H1 (cell line): ENCODE measurements at regions of chr11 and their contacts with region 1.

Region 1: GRCh38 chr11:61671527-61671926 is 8.7 kb upstream of the DAGLA start:
- DNase-seq: no peak
- H3K4me3 ChIP-seq: no peak overlapping the region
- H3K27ac ChIP-seq: no peak overlapping the region
- H3K4me1 ChIP-seq: peaks cover 0 to 3% (median under 1%) of the 10 kb centered on the region in 4 experiments; a peak in 2 of 7 replicates
- H3K27me3 ChIP-seq: no peaks in the 10 kb centered on the region; a peak in 2 of 7 replicates
- CTCF ChIP-seq: peak; percentile 78 to 88 (median 84)
- EP300 ChIP-seq: no peak
- POLR2A ChIP-seq: no peak
- RAD21 ChIP-seq: peak; percentile 42 to 53; a peak in 3 of 4 replicates

Region 2: DNA sequence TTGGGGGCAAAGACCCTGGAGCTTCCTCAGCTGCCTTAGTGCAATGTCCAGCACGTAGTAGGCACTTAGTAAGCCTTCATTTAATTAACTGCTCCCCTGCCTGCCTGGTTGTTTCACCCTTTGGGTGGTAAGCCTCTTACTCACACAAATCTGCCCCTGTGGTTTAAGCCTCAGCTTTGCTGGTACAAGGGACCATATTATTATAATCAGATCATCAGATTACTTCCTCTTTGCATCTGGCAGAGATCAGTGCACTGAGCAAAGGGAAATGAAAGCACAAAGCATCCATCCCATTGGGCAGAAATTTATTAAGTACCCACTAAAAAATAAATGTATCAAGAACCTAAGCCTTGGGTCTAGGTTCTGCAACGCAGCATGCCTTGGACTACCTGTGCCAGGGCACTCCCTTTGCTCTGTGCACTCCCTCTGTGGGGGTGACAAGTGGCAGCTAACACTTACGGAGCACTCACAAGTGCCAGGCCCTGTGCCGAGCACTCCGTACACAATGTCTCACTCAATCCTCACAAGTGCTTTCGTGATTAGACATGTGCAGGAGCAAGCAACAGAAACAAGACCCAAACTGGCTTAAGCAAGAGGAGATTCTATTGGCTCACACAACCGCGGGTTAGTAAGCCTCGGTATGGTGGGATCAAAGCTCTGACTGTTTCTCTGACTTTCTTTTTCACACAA is 26.2 kb before region 1 on chr11:
- CTCF ChIA-PET with region 1: interaction called, 12 read pairs
- POLR2A ChIA-PET with region 1: no interaction called
- DNase-seq: no peak
- H3K4me3 ChIP-seq: no peak overlapping the region
- H3K27ac ChIP-seq: no peak overlapping the region
- H3K4me1 ChIP-seq: peaks cover 0 to 3% (median 0%) of the 10 kb centered on the region in 4 experiments; a peak in 1 of 7 replicates
- H3K27me3 ChIP-seq: no peaks in the 10 kb centered on the region
- CTCF ChIP-seq: no peak
- EP300 ChIP-seq: no peak
- POLR2A ChIP-seq: no peak
- RAD21 ChIP-seq: no peak

Region 3: DNA sequence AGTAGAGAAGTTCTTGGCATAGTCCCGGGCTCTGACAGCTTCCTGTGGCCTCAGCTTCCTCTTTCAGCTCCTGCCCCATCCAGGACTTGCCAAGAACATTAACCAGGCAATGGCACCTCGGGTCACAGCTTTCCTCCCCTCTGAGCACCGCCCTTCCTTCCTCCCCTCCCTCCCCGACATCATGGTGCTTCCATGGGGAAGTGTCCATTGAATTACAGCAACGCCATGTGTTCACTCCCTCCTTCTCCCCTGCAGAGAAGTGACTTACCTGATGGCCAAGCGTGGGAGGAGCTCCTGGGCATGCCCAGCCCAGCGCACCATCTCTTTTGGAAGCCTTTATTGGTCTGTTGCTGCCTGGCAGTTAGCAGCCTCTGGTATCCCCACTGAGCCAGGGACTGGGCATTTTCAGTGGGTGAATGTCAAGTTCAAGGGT is 17.1 kb before region 1 on chr11:
- CTCF ChIA-PET with region 1: interaction called, 15 read pairs
- POLR2A ChIA-PET with region 1: interaction called, 3 read pairs
- DNase-seq: no peak
- H3K4me3 ChIP-seq: no peak overlapping the region
- H3K27ac ChIP-seq: no peak overlapping the region
- H3K4me1 ChIP-seq: peaks cover 6 to 15% (median 10%) of the 10 kb centered on the region in 4 experiments
- H3K27me3 ChIP-seq: no peaks in the 10 kb centered on the region
- CTCF ChIP-seq: no peak
- EP300 ChIP-seq: no peak
- POLR2A ChIP-seq: no peak
- RAD21 ChIP-seq: no peak

Region 4: GRCh38 chr11:61659414-61660209 is 11.9 kb before region 1 on chr11:
- CTCF ChIA-PET with region 1: interaction called, 15 read pairs
- POLR2A ChIA-PET with region 1: interaction called, 3 read pairs
- DNase-seq: no peak
- H3K4me3 ChIP-seq: no peak overlapping the region
- H3K27ac ChIP-seq: no peak overlapping the region
- H3K4me1 ChIP-seq: peaks cover 4 to 10% (median 7%) of the 10 kb centered on the region in 4 experiments
- H3K27me3 ChIP-seq: no peaks in the 10 kb centered on the region
- CTCF ChIP-seq: peak in 2 of 3 experiments; percentile 33; a peak in 3 of 4 replicates
- EP300 ChIP-seq: no peak
- POLR2A ChIP-seq: no peak
- RAD21 ChIP-seq: peak in 1 of 2 experiments; percentile 31; a peak in 1 of 4 replicates

Region 5: DNA sequence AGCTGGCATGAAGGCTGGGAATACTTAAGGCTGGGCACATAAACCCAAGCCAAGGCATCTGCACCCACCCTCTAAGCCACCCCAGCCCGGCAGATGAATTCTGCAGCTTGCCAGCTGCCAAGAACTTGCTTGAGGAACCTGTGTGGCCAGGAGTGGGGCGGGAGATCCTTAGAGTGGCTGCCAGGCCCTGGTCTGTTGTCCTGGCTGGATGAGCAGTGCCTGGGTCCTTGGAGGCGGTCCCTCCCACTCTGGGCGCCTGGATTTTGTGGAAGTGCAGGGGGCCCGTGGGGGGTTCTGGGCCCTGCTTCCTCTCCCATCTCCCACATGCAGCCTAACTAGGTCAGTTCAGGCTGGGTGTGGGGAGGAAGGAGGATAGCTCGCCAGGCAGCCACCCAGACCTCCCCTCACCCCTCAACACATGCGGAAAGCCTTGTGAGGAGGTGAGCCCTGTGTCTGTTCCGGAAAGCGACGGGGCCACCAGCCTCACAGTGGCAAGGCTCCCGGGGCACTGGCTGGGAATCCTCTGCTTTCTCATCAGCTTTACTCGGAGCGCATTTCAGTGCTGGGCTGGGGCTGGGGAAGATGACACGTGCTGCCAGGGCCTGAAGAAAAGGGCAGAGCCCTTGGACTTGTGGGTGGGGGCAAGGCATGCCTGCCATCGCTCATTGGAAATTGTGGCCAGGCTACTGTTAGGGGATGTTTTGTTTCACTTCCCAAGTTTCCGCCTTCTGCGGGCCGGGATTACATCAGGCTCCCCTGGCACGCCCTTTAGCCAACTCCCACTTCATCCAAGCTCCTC is 17.0 kb after region 1 on chr11:
- CTCF ChIA-PET with region 1: interaction called, 22 read pairs
- POLR2A ChIA-PET with region 1: interaction called, 3 read pairs
- DNase-seq: no peak
- H3K4me3 ChIP-seq: no peak overlapping the region
- H3K27ac ChIP-seq: no peak overlapping the region
- H3K4me1 ChIP-seq: peaks cover 0 to 16% (median 10%) of the 10 kb centered on the region in 4 experiments; a peak in 4 of 7 replicates
- H3K27me3 ChIP-seq: no peaks in the 10 kb centered on the region; a peak in 1 of 7 replicates
- CTCF ChIP-seq: no peak
- EP300 ChIP-seq: no peak
- POLR2A ChIP-seq: no peak
- RAD21 ChIP-seq: no peak

Region 6: DNA sequence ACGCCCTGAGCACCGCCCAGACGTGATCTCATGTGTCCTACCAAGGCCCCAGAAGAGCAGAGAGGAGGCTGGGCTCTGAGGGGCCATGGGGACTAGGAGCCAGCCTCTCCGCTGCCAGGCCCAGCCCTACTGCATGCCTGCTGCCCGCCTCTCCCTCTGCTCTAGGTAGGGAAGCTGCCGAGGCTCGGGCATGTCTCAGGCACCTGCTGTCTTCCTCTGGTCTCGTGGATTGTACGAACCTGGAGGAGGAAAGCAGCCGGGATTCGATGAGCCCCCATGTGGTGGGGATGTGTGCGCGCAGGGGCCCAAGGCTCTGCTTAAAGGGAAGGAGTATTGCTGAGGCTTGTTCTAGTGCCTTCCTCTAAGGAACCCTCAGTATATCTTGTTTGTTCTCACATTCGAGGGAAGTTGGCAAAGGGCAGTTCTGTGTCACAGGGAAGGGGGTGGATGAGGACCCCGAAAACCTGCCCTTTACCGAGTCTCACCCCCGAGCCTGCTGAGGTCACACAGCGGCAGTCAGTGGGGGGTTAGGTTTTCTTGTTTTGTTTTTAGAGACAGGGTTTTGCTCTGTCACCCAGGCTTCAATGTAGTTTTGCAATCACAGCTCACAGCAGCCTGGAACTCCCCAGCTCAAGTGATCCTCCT is 29.8 kb after region 1 on chr11:
- CTCF ChIA-PET with region 1: interaction called, 10 read pairs
- POLR2A ChIA-PET with region 1: interaction called, 4 read pairs
- DNase-seq: peak in 1 of 2 experiments; percentile 76
- H3K4me3 ChIP-seq: no peak overlapping the region; a peak in 1 of 8 replicates
- H3K27ac ChIP-seq: no peak overlapping the region
- H3K4me1 ChIP-seq: peaks cover 0 to 13% (median 2%) of the 10 kb centered on the region in 4 experiments; a peak in 4 of 7 replicates
- H3K27me3 ChIP-seq: no peaks in the 10 kb centered on the region; a peak in 1 of 7 replicates
- CTCF ChIP-seq: peak in 2 of 3 experiments; percentile 49 to 65; a peak in 3 of 4 replicates
- EP300 ChIP-seq: no peak
- POLR2A ChIP-seq: no peak
- RAD21 ChIP-seq: peak; percentile 40 to 56; a peak in 3 of 4 replicates

Region 7: GRCh38 chr11:62123669-62124185 is 452.2 kb after region 1 on chr11 and contains the start of gene INCENP:
- CTCF ChIA-PET with region 1: no interaction called
- POLR2A ChIA-PET with region 1: no interaction called
- DNase-seq: peak; percentile 87 to 94
- H3K4me3 ChIP-seq: peak within 1 kb of the TSS; percentile 67 to 98 (median 98)
- H3K27ac ChIP-seq: peak within 1 kb of the TSS; percentile 39; the same call in 1 of the 2 replicates
- H3K4me1 ChIP-seq: peaks cover 0 to 11% (median 7%) of the 10 kb centered on the region in 4 experiments; a peak in 5 of 7 replicates
- H3K27me3 ChIP-seq: no peaks in the 10 kb centered on the region
- CTCF ChIP-seq: no peak
- EP300 ChIP-seq: no peak
- POLR2A ChIP-seq: peak in 1 of 2 experiments; percentile 41; a peak in 1 of 3 replicates
- RAD21 ChIP-seq: no peak
- total RNA-seq, gene INCENP: 132 TPM in 2 replicates